ENCODE measurements at regions of chr10 and their contacts with region 1.

Region 1: DNA sequence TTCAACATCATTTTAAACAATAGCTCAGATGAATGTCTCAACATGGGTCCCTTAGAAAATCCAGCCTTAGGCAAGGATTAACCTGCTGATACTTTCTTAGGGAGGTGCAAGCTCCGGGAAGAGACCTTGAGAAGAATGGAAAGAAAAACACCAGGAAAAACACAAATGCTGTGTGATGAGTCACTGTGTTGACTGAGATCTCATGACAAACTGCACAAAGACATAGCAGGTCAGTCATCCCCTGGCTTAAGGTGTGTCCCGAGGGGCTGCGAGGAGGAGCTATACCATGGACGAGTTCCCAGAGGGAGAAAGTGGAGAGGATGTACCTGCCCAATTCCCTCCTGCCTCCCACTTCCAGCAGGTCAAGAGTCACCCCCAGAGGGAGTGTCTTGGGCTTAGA is 98.0 kb downstream of the TEX36 start:
- DNase-seq: peak; percentile 70 to 92
- H3K4me3 ChIP-seq: no peak overlapping the region
- H3K27ac ChIP-seq: peak overlapping the region; percentile 81
- H3K4me1 ChIP-seq: peaks cover 24% of the 10 kb centered on the region
- H3K27me3 ChIP-seq: no peaks in the 10 kb centered on the region
- CTCF ChIP-seq: no peak

Region 2: GRCh38 chr10:125411724-125412123 is 173.2 kb before region 1 on chr10:
- CTCF ChIA-PET with region 1: no interaction called
- POLR2A ChIA-PET with region 1: no interaction called
- intact Hi-C with region 1: no loop called
- DNase-seq: peak in 1 of 2 experiments; percentile 60
- H3K4me3 ChIP-seq: no peak overlapping the region
- H3K27ac ChIP-seq: no peak overlapping the region
- H3K4me1 ChIP-seq: peaks cover 16% of the 10 kb centered on the region
- H3K27me3 ChIP-seq: no peaks in the 10 kb centered on the region
- CTCF ChIP-seq: no peak

Region 3: GRCh38 chr10:125455471-125456254 is 129.3 kb before region 1 on chr10:
- CTCF ChIA-PET with region 1: no interaction called
- POLR2A ChIA-PET with region 1: no interaction called
- intact Hi-C with region 1: no loop called
- DNase-seq: peak in 1 of 2 experiments; percentile 74
- H3K4me3 ChIP-seq: peak overlapping the region; percentile 38; the same call in 1 of the 2 replicates
- H3K27ac ChIP-seq: peak overlapping the region; percentile 44
- H3K4me1 ChIP-seq: peaks cover 36% of the 10 kb centered on the region
- H3K27me3 ChIP-seq: no peaks in the 10 kb centered on the region
- CTCF ChIP-seq: no peak

Region 4: GRCh38 chr10:125514206-125515186 is 70.5 kb before region 1 on chr10:
- CTCF ChIA-PET with region 1: no interaction called
- POLR2A ChIA-PET with region 1: no interaction called
- intact Hi-C with region 1: loop called (anchors 2 kb)
- DNase-seq: peak; percentile 78 to 82
- H3K4me3 ChIP-seq: no peak overlapping the region
- H3K27ac ChIP-seq: 0 out of 2 replicates have a peak overlapping the region, but pooled peaks have one; percentile 12
- H3K4me1 ChIP-seq: peaks cover 19% of the 10 kb centered on the region
- H3K27me3 ChIP-seq: no peaks in the 10 kb centered on the region
- CTCF ChIP-seq: no peak

Region 5: DNA sequence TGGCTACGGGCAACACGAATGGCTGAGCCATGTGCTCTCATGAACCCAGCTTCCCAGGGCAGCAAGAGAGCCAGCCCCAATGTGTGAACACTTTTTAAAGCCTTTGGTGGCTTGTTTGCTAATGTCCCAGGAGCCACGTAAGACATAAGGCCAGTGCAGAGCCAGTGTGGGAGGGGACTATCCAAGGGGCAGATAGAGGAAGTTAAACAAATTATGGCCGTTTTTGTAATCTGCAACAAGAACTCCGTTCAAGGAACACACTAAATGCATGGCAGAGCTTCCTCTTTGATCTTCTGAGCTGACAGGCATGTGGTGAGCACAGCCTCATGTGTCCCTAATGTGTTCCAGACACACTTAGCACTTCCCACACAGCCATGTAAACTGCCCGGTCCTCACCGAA is 35.3 kb before region 1 on chr10:
- CTCF ChIA-PET with region 1: no interaction called
- POLR2A ChIA-PET with region 1: no interaction called
- intact Hi-C with region 1: no loop called
- DNase-seq: no peak
- H3K4me3 ChIP-seq: no peak overlapping the region
- H3K27ac ChIP-seq: no peak overlapping the region
- H3K4me1 ChIP-seq: no peaks in the 10 kb centered on the region
- H3K27me3 ChIP-seq: no peaks in the 10 kb centered on the region
- CTCF ChIP-seq: no peak

Region 6: DNA sequence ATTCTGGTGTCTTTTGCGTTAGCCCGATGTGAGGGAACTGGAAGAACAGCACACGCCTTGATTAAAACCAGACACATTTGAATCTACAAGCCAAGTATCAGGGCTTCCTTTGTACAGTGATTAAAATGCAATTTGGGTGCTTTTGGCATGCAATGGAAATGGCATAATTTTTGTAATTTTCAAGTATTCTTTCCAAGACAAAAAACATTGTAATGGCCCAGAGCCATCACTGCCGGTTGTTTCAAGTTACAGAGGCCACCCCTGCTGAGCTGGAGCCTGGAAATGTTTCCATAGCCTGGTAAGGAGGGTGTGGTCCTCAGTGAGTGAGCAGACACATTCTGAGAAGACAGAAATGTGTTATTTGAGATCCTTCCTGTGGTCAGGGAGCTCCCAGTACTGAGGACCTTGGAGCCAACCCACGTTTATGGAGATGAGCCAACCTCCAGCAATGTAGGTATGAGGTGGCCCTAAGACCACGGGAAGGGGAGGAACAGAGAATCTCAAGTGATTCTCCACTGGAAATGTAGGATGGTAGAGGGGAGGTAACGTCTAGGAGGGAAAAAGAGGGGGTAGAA is 77.1 kb after region 1 on chr10:
- CTCF ChIA-PET with region 1: interaction called, 3 read pairs
- POLR2A ChIA-PET with region 1: no interaction called
- intact Hi-C with region 1: loop called (anchors 5 kb)
- DNase-seq: peak; percentile 73 to 93
- H3K4me3 ChIP-seq: no peak overlapping the region
- H3K27ac ChIP-seq: peak overlapping the region; percentile 90
- H3K4me1 ChIP-seq: peaks cover 22% of the 10 kb centered on the region
- H3K27me3 ChIP-seq: no peaks in the 10 kb centered on the region
- CTCF ChIP-seq: no peak

Region 7: GRCh38 chr10:125828311-125828710 is 243.4 kb after region 1 on chr10:
- CTCF ChIA-PET with region 1: no interaction called
- POLR2A ChIA-PET with region 1: interaction called, 17 read pairs
- intact Hi-C with region 1: no loop called
- DNase-seq: no peak
- H3K4me3 ChIP-seq: no peak overlapping the region
- H3K27ac ChIP-seq: no peak overlapping the region
- H3K4me1 ChIP-seq: peaks cover 14% of the 10 kb centered on the region
- H3K27me3 ChIP-seq: no peaks in the 10 kb centered on the region
- CTCF ChIP-seq: no peak

Measured in PC-9 (cell line).